ENCODE measurements at regions of chr12 and their contacts with region 1.

Region 1: GRCh38 chr12:98606357-98606988 is 13.0 kb downstream of the SLC25A3 start:
- DNase-seq: no peak
- H3K4me3 ChIP-seq: no peak overlapping the region
- H3K27ac ChIP-seq: no peak overlapping the region
- H3K4me1 ChIP-seq: no peaks in the 10 kb centered on the region
- H3K27me3 ChIP-seq: no peaks in the 10 kb centered on the region
- CTCF ChIP-seq: peak; percentile 25; the same call in 1 of the 2 replicates

Region 2: GRCh38 chr12:98174428-98174809 is 432.1 kb before region 1 on chr12:
- CTCF ChIA-PET with region 1: no interaction called
- POLR2A ChIA-PET with region 1: no interaction called
- intact Hi-C with region 1: no loop called
- DNase-seq: no peak
- H3K4me3 ChIP-seq: no peak overlapping the region
- H3K27ac ChIP-seq: no peak overlapping the region
- H3K4me1 ChIP-seq: no peaks in the 10 kb centered on the region
- H3K27me3 ChIP-seq: no peaks in the 10 kb centered on the region
- CTCF ChIP-seq: no peak

Region 3: GRCh38 chr12:98425859-98426258 is 180.6 kb before region 1 on chr12:
- CTCF ChIA-PET with region 1: no interaction called
- POLR2A ChIA-PET with region 1: no interaction called
- intact Hi-C with region 1: no loop called
- DNase-seq: no peak
- H3K4me3 ChIP-seq: no peak overlapping the region
- H3K27ac ChIP-seq: peak overlapping the region; percentile 26
- H3K4me1 ChIP-seq: peaks cover 28% of the 10 kb centered on the region
- H3K27me3 ChIP-seq: no peaks in the 10 kb centered on the region
- CTCF ChIP-seq: no peak

Region 4: DNA sequence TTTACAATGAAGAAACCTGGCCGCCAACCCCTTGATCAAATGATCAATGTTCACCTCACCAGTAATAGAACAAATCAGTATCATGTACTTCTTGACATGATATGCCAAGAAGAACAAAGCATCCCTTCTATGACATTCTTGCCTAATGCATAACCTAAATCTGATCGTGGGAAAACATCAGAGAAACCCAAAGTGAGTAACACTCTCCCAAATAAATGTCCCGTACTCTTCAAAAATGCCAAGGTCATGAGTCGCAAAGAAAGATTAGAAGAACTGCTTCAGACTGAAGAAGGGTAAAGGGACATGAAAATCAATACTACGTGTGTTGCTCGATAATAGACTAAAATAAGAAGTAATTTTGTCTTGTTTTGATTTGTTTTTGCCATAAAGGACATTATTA is 24.4 kb before region 1 on chr12:
- CTCF ChIA-PET with region 1: no interaction called
- POLR2A ChIA-PET with region 1: interaction called, 11 read pairs
- intact Hi-C with region 1: no loop called
- DNase-seq: no peak
- H3K4me3 ChIP-seq: no peak overlapping the region
- H3K27ac ChIP-seq: no peak overlapping the region
- H3K4me1 ChIP-seq: no peaks in the 10 kb centered on the region
- H3K27me3 ChIP-seq: no peaks in the 10 kb centered on the region
- CTCF ChIP-seq: no peak

Region 5: DNA sequence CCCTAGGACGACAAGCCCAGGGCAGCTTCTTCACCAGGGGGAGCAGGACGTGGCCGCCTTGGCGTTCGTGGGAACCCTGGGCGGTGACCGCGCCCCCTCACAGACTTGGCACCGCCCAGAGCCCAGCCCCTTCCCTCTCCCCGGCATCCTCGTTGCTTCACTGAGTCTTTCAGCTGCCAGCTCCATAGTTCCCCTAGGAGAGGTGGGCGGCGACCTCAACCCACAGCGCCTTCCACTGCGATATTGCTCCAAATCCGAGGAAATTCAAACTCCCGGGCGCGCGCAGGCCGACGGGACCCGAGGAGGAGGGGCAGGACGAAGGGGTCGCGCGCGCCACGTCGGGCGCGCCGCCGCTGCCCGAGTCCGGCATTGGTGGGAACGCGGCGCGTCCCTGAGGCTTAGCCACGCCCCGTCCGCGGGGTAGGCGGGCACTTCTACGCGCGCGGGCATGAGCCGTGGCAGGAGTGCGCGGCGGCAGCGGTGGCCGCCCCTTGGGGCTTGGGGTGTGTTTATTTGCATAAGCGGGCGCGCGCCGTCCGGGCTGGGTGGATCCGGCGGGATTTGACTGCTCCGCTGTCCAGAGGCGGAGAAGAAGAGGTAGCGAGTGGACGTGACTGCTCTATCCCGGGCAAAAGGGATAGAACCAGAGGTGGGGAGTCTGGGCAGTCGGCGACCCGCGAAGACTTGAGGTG is 38.4 kb after region 1 on chr12 and contains the starts of genes APAF1 and IKBIP:
- CTCF ChIA-PET with region 1: no interaction called
- POLR2A ChIA-PET with region 1: no interaction called
- intact Hi-C with region 1: loop called (anchors 5 kb)
- DNase-seq: peak; percentile 98
- H3K4me3 ChIP-seq: peak within 1 kb of the TSS; percentile 85
- H3K27ac ChIP-seq: peak within 1 kb of the TSS; percentile 88
- H3K4me1 ChIP-seq: peaks cover 10% of the 10 kb centered on the region
- H3K27me3 ChIP-seq: no peaks in the 10 kb centered on the region
- CTCF ChIP-seq: no peak
- total RNA-seq, gene APAF1: 24.2 and 28.4 TPM in 2 replicates
- total RNA-seq, gene IKBIP: 23.2 and 24.3 TPM in 2 replicates

Region 6: GRCh38 chr12:99334285-99335056 is 728.0 kb after region 1 on chr12:
- CTCF ChIA-PET with region 1: no interaction called
- POLR2A ChIA-PET with region 1: no interaction called
- intact Hi-C with region 1: no loop called
- DNase-seq: peak; percentile 78
- H3K4me3 ChIP-seq: no peak overlapping the region
- H3K27ac ChIP-seq: no peak overlapping the region
- H3K4me1 ChIP-seq: peaks cover 10% of the 10 kb centered on the region
- H3K27me3 ChIP-seq: no peaks in the 10 kb centered on the region
- CTCF ChIP-seq: no peak

Measured in A673 (cell line).